Mammary epithelial cell (primary cell): ENCODE measurements at regions of chr1 and their contacts with region 1.

Region 1: DNA sequence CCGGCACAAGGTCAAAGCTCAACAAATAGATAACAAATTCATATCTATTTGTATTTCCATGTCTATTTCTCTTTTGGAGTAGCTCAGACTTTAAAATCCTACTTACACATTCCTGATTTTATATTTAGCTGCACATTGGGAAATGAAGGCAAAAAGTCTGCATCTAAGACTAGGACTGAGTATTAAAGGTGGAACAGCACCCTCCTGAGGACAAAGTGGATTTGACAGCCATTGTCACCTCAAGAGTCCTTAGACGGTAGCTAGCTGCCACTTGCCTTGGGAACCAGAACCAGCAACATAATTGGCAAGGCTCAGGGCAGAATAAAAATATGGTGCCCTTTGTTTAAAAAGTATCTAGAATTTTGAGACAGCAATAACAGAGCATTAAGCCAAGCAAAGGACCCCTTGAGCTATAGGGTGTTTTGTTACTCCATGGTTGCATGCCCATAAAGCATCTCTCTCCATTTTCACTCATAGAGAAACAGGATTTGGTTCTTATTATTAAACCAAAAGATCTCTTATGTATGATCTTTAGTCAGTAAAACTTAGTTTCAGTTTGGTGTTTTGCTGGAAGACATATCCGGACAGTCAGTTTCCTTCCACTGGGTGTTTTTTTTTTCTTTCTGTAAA is 30.0 kb upstream of the SGIP1 start:
- DNase-seq: peak; percentile 38
- H3K4me3 ChIP-seq: no peak overlapping the region
- H3K27ac ChIP-seq: no peak overlapping the region
- H3K4me1 ChIP-seq: no peaks in the 10 kb centered on the region
- H3K27me3 ChIP-seq: peaks cover 2% of the 10 kb centered on the region
- CTCF ChIP-seq: peak; percentile 71 to 75

Region 2: GRCh38 chr1:66253330-66253921 is 250.5 kb before region 1 on chr1:
- CTCF ChIA-PET with region 1: no interaction called
- dilution Hi-C with region 1: no loop called
- in situ Hi-C with region 1: no loop called
- intact Hi-C with region 1: loop called (anchors 1 kb)
- DNase-seq: peak; percentile 76
- H3K4me3 ChIP-seq: no peak overlapping the region
- H3K27ac ChIP-seq: no peak overlapping the region
- H3K4me1 ChIP-seq: no peaks in the 10 kb centered on the region
- H3K27me3 ChIP-seq: no peaks in the 10 kb centered on the region
- CTCF ChIP-seq: peak; percentile 84 to 91

Region 3: DNA sequence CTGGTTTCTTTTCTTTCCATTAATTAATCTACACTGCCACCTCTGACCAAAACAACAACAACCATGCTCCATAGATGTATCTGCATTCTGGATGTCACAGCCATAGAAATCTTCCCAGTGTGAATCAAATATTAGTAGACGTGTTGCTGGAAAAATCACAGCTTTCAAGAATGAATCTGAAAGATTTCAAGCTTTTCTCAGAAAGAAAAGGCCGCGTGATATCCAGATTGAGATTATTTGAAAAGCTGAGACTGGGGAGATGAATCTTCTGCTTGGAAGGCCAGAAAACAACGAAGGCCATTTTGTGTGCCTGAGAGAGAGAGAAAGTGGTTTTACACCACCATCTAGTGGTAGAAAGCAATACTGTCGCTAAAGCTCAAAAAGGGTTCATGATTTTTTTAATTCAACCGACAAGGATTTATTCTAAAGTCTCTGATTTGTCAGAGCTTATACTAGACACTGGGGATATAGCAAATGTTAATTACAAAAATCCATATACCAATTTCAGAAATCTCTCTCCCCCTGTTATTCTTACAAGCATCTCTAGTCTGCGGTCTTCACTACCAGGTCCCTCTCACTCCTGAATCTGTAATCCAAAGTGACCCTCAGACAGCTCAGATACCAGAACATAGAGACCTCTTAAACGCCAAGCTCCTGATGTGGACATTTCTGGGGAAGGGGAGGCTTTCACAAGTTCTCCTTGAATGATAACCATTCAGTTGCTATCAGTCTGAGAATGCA is 57.5 kb before region 1 on chr1:
- CTCF ChIA-PET with region 1: interaction called, 3 read pairs
- dilution Hi-C with region 1: no loop called
- in situ Hi-C with region 1: no loop called
- intact Hi-C with region 1: loop called (anchors 1 kb)
- DNase-seq: peak; percentile 46
- H3K4me3 ChIP-seq: no peak overlapping the region
- H3K27ac ChIP-seq: no peak overlapping the region
- H3K4me1 ChIP-seq: no peaks in the 10 kb centered on the region
- H3K27me3 ChIP-seq: peaks cover 3% of the 10 kb centered on the region
- CTCF ChIP-seq: peak; percentile 77 to 85

Region 4: GRCh38 chr1:66711420-66711819 is 207.5 kb after region 1 on chr1:
- CTCF ChIA-PET with region 1: no interaction called
- dilution Hi-C with region 1: no loop called
- in situ Hi-C with region 1: no loop called
- intact Hi-C with region 1: loop called (anchors 5 kb)
- DNase-seq: no peak
- H3K4me3 ChIP-seq: no peak overlapping the region
- H3K27ac ChIP-seq: no peak overlapping the region
- H3K4me1 ChIP-seq: no peaks in the 10 kb centered on the region
- H3K27me3 ChIP-seq: peaks cover 8% of the 10 kb centered on the region
- CTCF ChIP-seq: peak; percentile 19 to 33

Region 5: GRCh38 chr1:66725885-66726665 is 222.1 kb after region 1 on chr1:
- CTCF ChIA-PET with region 1: no interaction called
- dilution Hi-C with region 1: no loop called
- in situ Hi-C with region 1: no loop called
- intact Hi-C with region 1: loop called (anchors 1 kb)
- DNase-seq: peak; percentile 56
- H3K4me3 ChIP-seq: no peak overlapping the region
- H3K27ac ChIP-seq: no peak overlapping the region
- H3K4me1 ChIP-seq: no peaks in the 10 kb centered on the region
- H3K27me3 ChIP-seq: no peaks in the 10 kb centered on the region
- CTCF ChIP-seq: peak; percentile 97 to 98